HEK293 (cell line): ENCODE measurements at regions of chr19 and their contacts with region 1.

Region 1: GRCh38 chr19:29610563-29611271 is 4.6 kb downstream of the POP4 start:
- H3K4me3 ChIP-seq: no peak overlapping the region
- H3K27ac ChIP-seq: no peak overlapping the region
- H3K4me1 ChIP-seq: peaks cover 7% of the 10 kb centered on the region
- CTCF ChIP-seq: peak; percentile 98

Region 2: DNA sequence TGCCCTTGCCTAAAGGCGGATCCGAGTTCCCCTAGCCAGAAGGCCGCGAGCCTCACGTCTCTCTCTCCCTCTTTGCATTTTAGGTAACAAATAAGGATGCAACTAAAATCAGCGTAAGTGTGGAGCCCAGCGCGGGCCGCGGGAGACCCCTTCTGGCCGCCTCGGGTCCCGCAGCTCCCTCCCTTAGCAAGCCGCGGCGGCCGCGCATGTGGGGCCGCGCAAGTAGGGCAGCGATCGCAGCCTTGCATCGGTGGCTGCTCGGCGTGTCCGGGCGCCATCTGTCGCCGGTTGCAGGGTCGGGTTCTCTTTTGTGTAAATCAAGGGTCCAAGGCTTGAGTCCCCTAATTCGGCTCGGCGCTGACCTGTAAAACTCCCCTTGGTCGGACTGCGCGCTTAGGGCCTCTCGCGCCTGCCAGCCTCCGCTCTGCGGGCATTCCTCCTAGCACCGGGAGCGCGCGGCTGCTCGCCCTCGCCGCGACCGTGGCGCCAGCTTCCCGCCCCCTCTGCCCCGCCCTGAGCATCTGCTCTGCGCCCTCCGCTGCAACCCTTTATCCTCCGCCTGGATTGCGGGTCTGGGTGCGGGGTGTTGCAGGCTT is 82.3 kb before region 1 on chr19:
- CTCF ChIA-PET with region 1: interaction called, 4 read pairs
- POLR2A ChIA-PET with region 1: interaction called, 15 read pairs
- H3K4me3 ChIP-seq: peak overlapping the region; percentile 39
- H3K27ac ChIP-seq: peak overlapping the region; percentile 55; the same call in 1 of the 2 replicates
- H3K4me1 ChIP-seq: peaks cover 37% of the 10 kb centered on the region
- CTCF ChIP-seq: peak; percentile 99

Region 3: GRCh38 chr19:29596885-29597525 is 13.7 kb before region 1 on chr19:
- CTCF ChIA-PET with region 1: interaction called, 24 read pairs
- POLR2A ChIA-PET with region 1: interaction called, 31 read pairs
- H3K4me3 ChIP-seq: no peak overlapping the region
- H3K27ac ChIP-seq: peak overlapping the region; percentile 37; the same call in 1 of the 2 replicates
- H3K4me1 ChIP-seq: peaks cover 21% of the 10 kb centered on the region
- CTCF ChIP-seq: peak; percentile 87

Region 4: DNA sequence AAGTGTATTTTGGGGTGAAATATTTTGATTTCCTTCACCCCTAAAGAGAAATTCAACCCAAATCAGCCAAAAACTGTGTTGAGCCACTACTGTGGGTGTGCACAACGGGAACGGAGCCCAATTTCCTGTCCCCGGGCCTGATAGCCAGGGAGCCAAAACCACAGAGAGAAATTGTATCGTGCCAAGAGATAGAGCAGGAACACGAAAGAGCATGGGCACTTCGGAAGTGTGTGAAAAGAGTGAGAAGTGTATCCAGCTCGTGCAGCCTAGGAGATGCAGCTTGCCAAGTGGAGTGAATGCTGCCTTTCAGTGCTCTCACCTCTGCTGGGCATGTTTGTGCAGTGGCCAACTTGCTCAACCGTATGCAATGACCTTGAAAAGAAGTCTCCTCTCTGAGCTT is 35.2 kb after region 1 on chr19:
- CTCF ChIA-PET with region 1: interaction called, 11 read pairs
- POLR2A ChIA-PET with region 1: interaction called, 7 read pairs
- H3K4me3 ChIP-seq: no peak overlapping the region
- H3K27ac ChIP-seq: no peak overlapping the region
- H3K4me1 ChIP-seq: peaks cover 7% of the 10 kb centered on the region; the same call in 1 of the 2 replicates
- CTCF ChIP-seq: no peak

Region 5: DNA sequence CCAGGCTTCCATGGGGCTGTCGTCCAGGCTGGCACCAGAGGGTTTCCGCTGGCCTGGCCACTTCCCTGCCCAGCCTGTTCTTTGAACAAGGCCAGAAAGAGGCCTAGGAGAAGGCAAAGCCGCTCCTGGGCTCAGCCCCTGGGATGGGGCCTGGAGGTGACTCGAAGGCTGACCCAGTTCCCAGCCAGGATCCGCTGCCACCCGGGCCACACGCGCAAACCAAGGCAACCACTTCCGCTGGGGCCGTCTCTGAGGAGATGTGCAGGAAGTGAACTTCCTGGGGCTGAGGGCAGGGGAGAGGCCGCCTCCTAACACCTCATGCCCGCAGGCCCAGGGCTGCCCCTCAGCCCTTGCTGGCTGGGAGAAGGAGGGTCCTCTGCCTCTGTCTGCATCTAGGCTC is 69.7 kb after region 1 on chr19:
- CTCF ChIA-PET with region 1: interaction called, 22 read pairs
- POLR2A ChIA-PET with region 1: interaction called, 8 read pairs
- H3K4me3 ChIP-seq: no peak overlapping the region
- H3K27ac ChIP-seq: no peak overlapping the region
- H3K4me1 ChIP-seq: no peaks in the 10 kb centered on the region
- CTCF ChIP-seq: no peak

Region 6: GRCh38 chr19:29704562-29705558 is 94.1 kb after region 1 on chr19:
- CTCF ChIA-PET with region 1: interaction called, 299 read pairs
- POLR2A ChIA-PET with region 1: interaction called, 4 read pairs
- H3K4me3 ChIP-seq: no peak overlapping the region
- H3K27ac ChIP-seq: no peak overlapping the region
- H3K4me1 ChIP-seq: no peaks in the 10 kb centered on the region
- CTCF ChIP-seq: no peak

Region 7: DNA sequence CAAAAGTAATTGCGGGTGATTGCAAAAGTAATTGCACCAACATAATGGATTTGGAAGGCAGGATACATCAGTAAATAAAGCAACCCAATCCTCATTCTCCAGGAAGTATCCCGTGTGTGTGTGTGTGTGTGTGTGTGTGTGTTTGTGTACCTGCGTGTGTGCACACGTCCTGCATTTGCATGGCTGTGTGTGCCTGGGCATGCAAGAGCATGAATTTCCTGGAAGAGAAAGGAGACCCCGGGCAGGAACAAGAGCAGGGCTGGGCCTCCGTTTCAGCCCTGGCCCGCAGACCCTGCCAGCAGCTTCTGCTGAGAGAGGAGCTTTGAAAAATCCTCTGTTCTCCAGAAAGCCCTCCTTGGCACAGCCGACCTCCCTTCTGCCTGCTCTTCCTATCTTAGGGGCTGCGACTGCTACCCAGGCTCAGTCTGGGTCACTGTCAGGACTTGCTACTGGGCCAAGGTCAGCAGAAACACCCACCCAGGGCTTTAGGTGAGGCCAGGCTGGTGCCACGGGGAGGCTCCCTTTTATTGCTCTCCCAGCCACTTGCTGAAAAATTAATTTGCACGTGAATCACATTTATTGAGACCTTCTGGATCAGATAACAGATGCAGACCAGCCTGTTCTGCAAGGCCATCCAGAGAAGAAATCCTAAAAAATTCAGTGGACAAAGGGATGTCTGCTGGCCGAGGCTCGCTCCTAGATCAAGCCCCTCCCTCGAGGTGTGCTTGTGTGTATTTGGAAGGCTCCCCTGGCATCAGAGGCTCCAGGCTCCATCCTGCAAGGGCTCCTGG is 1019.8 kb after region 1 on chr19:
- CTCF ChIA-PET with region 1: no interaction called
- POLR2A ChIA-PET with region 1: no interaction called
- H3K4me3 ChIP-seq: no peak overlapping the region
- H3K27ac ChIP-seq: no peak overlapping the region
- H3K4me1 ChIP-seq: peaks cover 7% of the 10 kb centered on the region
- CTCF ChIP-seq: no peak